Naive thymus-derived CD4-positive, alpha-beta T cell (primary cell): ENCODE measurements at regions of chr10 and their contacts with region 1.

Region 1: GRCh38 chr10:12195603-12196506 is at the starts of genes CDC123 and NUDT5:
- DNase-seq: peak; percentile 77 to 89 (median 87)
- ATAC-seq: peak; percentile 96
- H3K4me3 ChIP-seq: peak within 1 kb of the TSS; percentile 84
- H3K4me3 Mint-ChIP-seq: peak within 1 kb of the TSS; percentile 94 to 99 (median 97)
- H3K27ac ChIP-seq: peak within 1 kb of the TSS; percentile 97
- H3K27ac Mint-ChIP-seq: peak within 1 kb of the TSS; percentile 96 to 99 (median 99)
- H3K4me1 ChIP-seq: peaks cover 9 to 12% of the 10 kb centered on the region in 2 donors
- H3K4me1 Mint-ChIP-seq: peaks cover 43 to 72% (median 59%) of the 10 kb centered on the region in 7 donors
- H3K27me3 ChIP-seq: no peaks in the 10 kb centered on the region
- H3K27me3 Mint-ChIP-seq: no peaks in the 10 kb centered on the region
- total RNA-seq, gene CDC123: 27.0 to 97.8 (median 34.2) TPM
- total RNA-seq, gene NUDT5: 24.5 to 89.4 (median 47.4) TPM

Region 2: GRCh38 chr10:11611248-11612020 is 584.4 kb before region 1 on chr10 and contains the start of gene USP6NL:
- CTCF ChIA-PET with region 1: no interaction called
- POLR2A ChIA-PET with region 1: no interaction called
- intact Hi-C with region 1: loop called in 1 of 2 experiments (anchors 10 kb)
- DNase-seq: peak; percentile 44 to 75 (median 59)
- ATAC-seq: peak; percentile 84
- H3K4me3 ChIP-seq: peak within 1 kb of the TSS; percentile 70
- H3K4me3 Mint-ChIP-seq: peak within 1 kb of the TSS; percentile 86 to 98 (median 94)
- H3K27ac ChIP-seq: peak within 1 kb of the TSS; percentile 69
- H3K27ac Mint-ChIP-seq: peak within 1 kb of the TSS; percentile 62 to 97 (median 94)
- H3K4me1 ChIP-seq: peaks cover 0 to 9% of the 10 kb centered on the region in 2 donors
- H3K4me1 Mint-ChIP-seq: peaks cover 24 to 60% (median 50%) of the 10 kb centered on the region in 7 donors
- H3K27me3 ChIP-seq: no peaks in the 10 kb centered on the region
- H3K27me3 Mint-ChIP-seq: peaks cover 0 to 62% (median 0%) of the 10 kb centered on the region in 5 donors
- total RNA-seq, gene USP6NL: 0.70 to 6.6 (median 5.0) TPM

Region 3: GRCh38 chr10:11993834-11994468 is 201.9 kb before region 1 on chr10:
- CTCF ChIA-PET with region 1: no interaction called
- POLR2A ChIA-PET with region 1: no interaction called
- intact Hi-C with region 1: no loop called
- DNase-seq: no peak
- ATAC-seq: no peak
- H3K4me3 ChIP-seq: no peak overlapping the region
- H3K4me3 Mint-ChIP-seq: peak overlapping the region in 6 of 10 donors; percentile 18 to 53 (median 35)
- H3K27ac ChIP-seq: no peak overlapping the region
- H3K27ac Mint-ChIP-seq: peak overlapping the region in 7 of 9 donors; percentile 24 to 78 (median 69)
- H3K4me1 ChIP-seq: peaks cover 6 to 10% of the 10 kb centered on the region in 2 donors
- H3K4me1 Mint-ChIP-seq: peaks cover 6 to 26% (median 21%) of the 10 kb centered on the region in 7 donors
- H3K27me3 ChIP-seq: no peaks in the 10 kb centered on the region
- H3K27me3 Mint-ChIP-seq: no peaks in the 10 kb centered on the region

Region 4: GRCh38 chr10:12042797-12043651 is 152.8 kb before region 1 on chr10 and contains the start of gene UPF2:
- CTCF ChIA-PET with region 1: interaction called, 3 read pairs
- POLR2A ChIA-PET with region 1: interaction called, 11 read pairs
- intact Hi-C with region 1: loop called (anchors 1 kb)
- DNase-seq: peak; percentile 95 to 98 (median 97)
- ATAC-seq: peak; percentile 93
- H3K4me3 ChIP-seq: peak within 1 kb of the TSS; percentile 83
- H3K4me3 Mint-ChIP-seq: peak within 1 kb of the TSS; percentile 87 to 100 (median 95)
- H3K27ac ChIP-seq: peak within 1 kb of the TSS; percentile 92
- H3K27ac Mint-ChIP-seq: peak within 1 kb of the TSS; percentile 98 to 100 (median 99)
- H3K4me1 ChIP-seq: peaks cover 10 to 16% of the 10 kb centered on the region in 2 donors
- H3K4me1 Mint-ChIP-seq: peaks cover 13 to 47% (median 40%) of the 10 kb centered on the region in 7 donors
- H3K27me3 ChIP-seq: no peaks in the 10 kb centered on the region
- H3K27me3 Mint-ChIP-seq: peaks cover 0 to 3% (median 0%) of the 10 kb centered on the region in 5 donors
- total RNA-seq, gene UPF2: 27.2 to 40.5 (median 36.3) TPM

Region 5: GRCh38 chr10:12129222-12130111 is 66.4 kb before region 1 on chr10 and contains the start of gene SEC61A2:
- CTCF ChIA-PET with region 1: no interaction called
- POLR2A ChIA-PET with region 1: no interaction called
- intact Hi-C with region 1: loop called (anchors 1 kb)
- DNase-seq: peak; percentile 89 to 100 (median 95)
- ATAC-seq: peak; percentile 96
- H3K4me3 ChIP-seq: peak within 1 kb of the TSS; percentile 48
- H3K4me3 Mint-ChIP-seq: peak within 1 kb of the TSS; percentile 83 to 93 (median 89)
- H3K27ac ChIP-seq: peak within 1 kb of the TSS; percentile 85
- H3K27ac Mint-ChIP-seq: peak within 1 kb of the TSS; percentile 52 to 93 (median 83)
- H3K4me1 ChIP-seq: peaks cover 5 to 12% of the 10 kb centered on the region in 2 donors
- H3K4me1 Mint-ChIP-seq: peaks cover 12 to 35% (median 26%) of the 10 kb centered on the region in 7 donors
- H3K27me3 ChIP-seq: no peaks in the 10 kb centered on the region
- H3K27me3 Mint-ChIP-seq: no peaks in the 10 kb centered on the region
- total RNA-seq, gene SEC61A2: 7.8 to 15.7 (median 12.7) TPM

Region 6: GRCh38 chr10:12214763-12215218 is 18.9 kb after region 1 on chr10:
- CTCF ChIA-PET with region 1: interaction called, 5 read pairs
- POLR2A ChIA-PET with region 1: interaction called, 5 read pairs
- intact Hi-C with region 1: loop called (anchors 1 to 2 kb)
- DNase-seq: peak in 7 of 9 donors; percentile 27 to 62 (median 47)
- ATAC-seq: peak; percentile 69
- H3K4me3 ChIP-seq: no peak overlapping the region
- H3K4me3 Mint-ChIP-seq: peak overlapping the region; percentile 61 to 84 (median 72)
- H3K27ac ChIP-seq: peak overlapping the region; percentile 38
- H3K27ac Mint-ChIP-seq: peak overlapping the region; percentile 73 to 96 (median 87)
- H3K4me1 ChIP-seq: no peaks in the 10 kb centered on the region
- H3K4me1 Mint-ChIP-seq: peaks cover 5 to 37% (median 20%) of the 10 kb centered on the region in 7 donors
- H3K27me3 ChIP-seq: no peaks in the 10 kb centered on the region
- H3K27me3 Mint-ChIP-seq: no peaks in the 10 kb centered on the region

Region 7: DNA sequence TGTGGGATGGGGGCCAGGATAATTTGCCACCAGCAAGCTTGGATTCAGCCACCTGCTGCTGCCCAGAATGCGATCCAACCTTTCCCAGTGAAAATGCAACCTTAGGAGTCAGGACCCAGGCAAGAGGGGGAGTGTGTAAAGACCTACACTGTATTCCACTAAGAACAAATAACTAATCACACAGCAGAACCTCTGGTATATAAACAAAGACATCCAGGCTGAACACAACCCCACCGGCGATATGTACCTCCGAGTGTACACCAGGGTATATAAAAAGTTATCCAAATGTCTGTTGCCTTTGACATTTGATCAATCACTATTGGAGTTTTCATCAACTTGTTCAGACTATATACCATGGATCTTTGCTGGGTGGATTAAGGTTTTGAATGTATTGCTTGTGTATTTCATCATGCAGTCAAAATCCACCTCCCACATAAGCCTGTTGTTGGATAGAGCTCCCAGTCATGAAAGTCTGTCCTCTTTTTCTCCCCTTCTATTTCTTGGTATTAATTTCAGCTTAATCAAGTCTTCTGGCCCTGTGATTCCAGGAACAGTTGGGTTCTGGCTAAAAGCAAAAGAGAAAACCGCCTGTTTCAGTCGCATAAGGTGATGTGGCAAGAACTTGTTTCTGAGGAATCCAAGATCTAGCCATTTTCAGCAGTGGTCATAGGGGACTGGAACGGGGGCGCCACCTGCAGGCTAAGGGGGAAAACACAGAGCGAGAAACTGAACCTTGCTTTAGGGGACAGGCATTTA is 514.9 kb after region 1 on chr10:
- CTCF ChIA-PET with region 1: no interaction called
- POLR2A ChIA-PET with region 1: no interaction called
- intact Hi-C with region 1: loop called in 1 of 2 experiments (anchors 5 kb)
- DNase-seq: peak; percentile 50 to 83 (median 71)
- ATAC-seq: peak; percentile 89
- H3K4me3 ChIP-seq: no peak overlapping the region
- H3K4me3 Mint-ChIP-seq: peak overlapping the region in 1 of 10 donors; percentile 42
- H3K27ac ChIP-seq: no peak overlapping the region
- H3K27ac Mint-ChIP-seq: peak overlapping the region in 4 of 9 donors; percentile 4 to 79 (median 46)
- H3K4me1 ChIP-seq: no peaks in the 10 kb centered on the region
- H3K4me1 Mint-ChIP-seq: peaks cover 5 to 53% (median 8%) of the 10 kb centered on the region in 7 donors
- H3K27me3 ChIP-seq: no peaks in the 10 kb centered on the region
- H3K27me3 Mint-ChIP-seq: no peaks in the 10 kb centered on the region

Region 8: DNA sequence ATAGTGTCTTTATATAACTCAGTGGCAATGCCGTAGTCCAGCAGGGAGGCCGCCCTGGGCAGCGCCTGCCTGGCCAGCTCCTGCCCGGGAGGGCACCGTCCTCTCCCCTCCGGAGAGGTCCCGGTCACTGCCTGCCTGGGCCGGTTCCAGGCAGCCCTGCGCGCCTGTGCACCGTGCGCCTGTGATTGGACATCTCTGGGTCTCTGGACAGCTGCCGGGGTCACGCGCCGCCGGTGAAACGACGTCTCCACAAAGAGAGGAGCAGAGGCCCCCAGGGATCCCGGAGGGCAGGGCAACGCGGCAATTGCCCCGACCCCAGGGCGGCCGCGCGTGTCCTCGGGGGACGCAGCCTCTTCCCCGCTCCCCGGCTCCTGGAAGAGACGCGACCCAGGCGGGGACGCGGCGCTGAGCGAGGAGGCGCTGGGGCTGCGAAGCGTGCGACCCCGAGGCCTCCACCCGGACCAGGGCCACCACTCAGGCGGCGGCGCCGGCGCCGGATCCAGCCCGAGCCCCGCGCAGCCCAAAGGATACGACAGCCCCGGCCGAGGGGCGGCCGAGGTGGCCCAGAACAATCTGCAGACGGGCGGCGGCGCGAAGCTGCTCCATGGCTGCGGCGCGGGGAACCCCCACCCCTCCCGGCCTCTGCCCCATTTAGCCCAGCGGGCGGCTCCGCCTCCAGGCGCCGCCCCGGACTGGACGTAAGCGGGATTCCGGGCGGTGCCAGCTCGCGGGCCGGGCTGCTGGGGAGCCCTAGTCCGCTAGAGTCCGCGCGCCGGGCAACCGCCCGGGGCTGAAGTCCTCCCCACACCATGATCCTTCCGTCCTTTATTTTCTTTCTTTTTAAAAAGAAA is 1103.8 kb after region 1 on chr10 and contains the start of gene PHYH:
- CTCF ChIA-PET with region 1: no interaction called
- POLR2A ChIA-PET with region 1: no interaction called
- intact Hi-C with region 1: loop called in 1 of 2 experiments (anchors 5 kb)
- DNase-seq: peak; percentile 70 to 88 (median 78)
- ATAC-seq: peak; percentile 77
- H3K4me3 ChIP-seq: peak within 1 kb of the TSS; percentile 69
- H3K4me3 Mint-ChIP-seq: peak within 1 kb of the TSS; percentile 70 to 96 (median 86)
- H3K27ac ChIP-seq: peak within 1 kb of the TSS; percentile 95
- H3K27ac Mint-ChIP-seq: peak within 1 kb of the TSS; percentile 92 to 99 (median 97)
- H3K4me1 ChIP-seq: peaks cover 16 to 19% of the 10 kb centered on the region in 2 donors
- H3K4me1 Mint-ChIP-seq: peaks cover 13 to 34% (median 22%) of the 10 kb centered on the region in 7 donors
- H3K27me3 ChIP-seq: no peaks in the 10 kb centered on the region
- H3K27me3 Mint-ChIP-seq: no peaks in the 10 kb centered on the region
- total RNA-seq, gene PHYH: 11.2 to 17.7 (median 13.2) TPM